Uterus (tissue), 4 donors: ENCODE measurements at regions of chr3 and their contacts with region 1.

Region 1: DNA sequence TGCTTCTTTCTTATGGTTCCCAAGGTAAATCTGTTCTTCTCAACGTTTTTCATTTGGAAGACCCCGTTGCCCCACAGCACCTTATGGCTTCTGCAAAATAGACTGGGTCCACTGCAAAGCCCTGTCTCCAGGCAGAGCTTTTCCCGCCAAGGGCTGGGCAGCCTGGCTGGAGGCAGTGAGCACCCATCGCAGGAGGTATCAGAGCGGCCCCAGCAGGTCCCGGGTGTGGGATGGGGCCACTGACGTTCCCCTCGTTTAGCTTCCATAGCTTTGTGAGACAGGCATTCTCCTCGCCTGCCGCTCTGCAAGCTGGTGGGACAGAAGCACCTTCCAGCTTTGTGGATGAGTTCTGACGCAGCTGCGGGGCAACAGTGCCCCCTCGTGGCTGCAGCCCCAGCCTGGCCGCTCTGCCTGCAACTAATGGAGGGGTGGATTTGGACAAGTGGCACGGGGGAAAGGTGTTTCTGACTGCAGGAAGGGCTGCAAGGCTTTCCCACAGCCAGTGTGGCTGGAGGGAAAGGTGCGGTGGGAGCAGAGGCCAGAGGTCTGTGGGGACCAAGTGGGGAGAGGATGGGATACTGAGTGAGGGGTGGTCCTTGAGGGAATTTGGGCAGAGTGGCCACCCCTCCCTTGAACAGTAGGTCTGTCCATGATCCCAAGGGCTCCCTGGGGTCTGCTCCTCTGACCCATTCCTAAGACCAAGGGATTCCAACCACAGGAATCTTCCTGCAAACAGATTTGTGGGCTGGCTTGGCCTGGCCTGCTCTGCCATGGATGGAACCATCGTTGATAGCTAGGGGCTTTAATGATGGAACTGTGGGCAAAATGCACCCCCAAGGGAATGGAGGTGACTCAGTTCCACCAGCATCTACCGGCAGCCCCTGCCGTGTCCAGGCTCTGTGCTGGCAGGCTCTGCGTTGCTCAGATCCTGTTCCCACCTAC is 99.4 kb downstream of the FBLN2 start:
- DNase-seq: peak; percentile 70 to 85
- H3K4me3 ChIP-seq: no peak overlapping the region
- H3K27ac ChIP-seq: no peak overlapping the region
- H3K4me1 ChIP-seq: peaks cover 0 to 9% of the 10 kb centered on the region in 2 donors
- H3K27me3 ChIP-seq: no peaks in the 10 kb centered on the region
- CTCF ChIP-seq: peak; percentile 84 to 96 (median 96)
- POLR2A ChIP-seq: no peak

Region 2: DNA sequence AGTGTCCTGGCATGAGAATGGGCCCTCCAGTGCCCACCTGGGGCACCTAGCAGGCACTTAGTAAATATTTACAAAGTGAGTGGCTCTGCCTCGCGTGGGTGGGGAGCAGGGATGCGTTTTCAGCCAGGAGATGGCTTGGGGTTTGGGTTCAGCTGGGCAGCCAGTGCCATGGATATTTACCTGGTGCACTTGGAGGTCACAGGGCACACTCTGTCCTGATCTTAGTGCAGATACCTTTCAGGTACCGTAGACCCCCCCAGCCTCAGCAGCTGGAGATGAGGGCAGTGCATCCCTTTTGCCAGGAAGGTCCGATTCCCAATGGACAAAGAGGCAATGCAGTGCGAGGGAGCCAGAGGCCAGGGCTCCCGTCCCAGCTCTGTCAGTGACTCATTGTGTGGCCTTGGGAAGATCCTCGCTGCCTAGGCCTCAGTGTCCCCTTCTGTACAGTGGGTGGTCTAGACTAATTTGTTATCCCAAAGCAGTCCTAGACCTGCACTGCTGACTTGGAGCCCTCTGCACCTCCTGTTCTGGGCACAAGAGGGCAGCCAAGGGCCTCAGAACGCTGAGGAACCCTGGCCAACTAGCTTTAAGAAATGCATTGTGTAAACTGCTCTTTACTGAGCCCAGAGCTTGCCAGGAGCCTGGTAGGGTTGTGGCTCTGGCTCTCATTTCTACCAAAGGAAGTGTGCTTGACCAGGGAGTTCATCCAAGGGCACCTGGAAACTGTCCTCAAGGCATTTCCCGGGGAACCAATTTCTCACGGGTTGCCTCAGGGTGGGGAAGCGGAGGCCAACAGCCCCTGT is 152.2 kb before region 1 on chr3:
- intact Hi-C with region 1: loop called (anchors 5 kb)
- DNase-seq: peak; percentile 74 to 80
- H3K4me3 ChIP-seq: no peak overlapping the region
- H3K27ac ChIP-seq: no peak overlapping the region
- H3K4me1 ChIP-seq: no peaks in the 10 kb centered on the region
- H3K27me3 ChIP-seq: no peaks in the 10 kb centered on the region
- CTCF ChIP-seq: peak; percentile 82 to 93 (median 92)
- POLR2A ChIP-seq: no peak